Endothelial cell of umbilical vein (primary cell): ENCODE measurements at regions of chr14 and their contacts with region 1.

Region 1: GRCh38 chr14:66403183-66403582 is 83.0 kb upstream of the CCDC196 start:
- DNase-seq: peak; percentile 27
- H3K4me3 ChIP-seq: no peak overlapping the region
- H3K27ac ChIP-seq: no peak overlapping the region
- H3K4me1 ChIP-seq: peaks cover 11% of the 10 kb centered on the region
- H3K27me3 ChIP-seq: no peaks in the 10 kb centered on the region
- CTCF ChIP-seq: peak; percentile 9 to 31
- POLR2A ChIP-seq: no peak

Region 2: DNA sequence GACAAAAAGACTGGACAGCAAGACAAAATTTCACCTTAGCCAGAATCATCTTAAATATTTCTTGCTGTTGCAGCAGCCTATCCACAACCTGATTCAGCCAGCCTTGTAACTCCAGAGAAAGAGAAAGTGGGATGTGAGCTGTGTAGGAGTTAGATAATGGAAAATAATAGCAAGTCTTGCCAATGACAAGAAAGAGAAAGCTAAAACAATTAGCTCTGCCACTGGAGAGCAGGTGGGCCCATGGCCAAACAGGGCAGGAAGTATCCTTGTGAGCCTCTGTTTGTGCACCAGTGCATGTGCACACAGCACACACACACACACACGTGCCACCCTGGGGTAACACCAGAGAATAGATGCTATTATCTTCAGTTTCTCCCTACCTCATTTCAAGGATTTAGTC is 23.0 kb before region 1 on chr14:
- CTCF ChIA-PET with region 1: interaction called, 10 read pairs
- POLR2A ChIA-PET with region 1: no interaction called
- dilution Hi-C with region 1: no loop called
- intact Hi-C with region 1: no loop called
- DNase-seq: peak; percentile 19
- H3K4me3 ChIP-seq: no peak overlapping the region
- H3K27ac ChIP-seq: no peak overlapping the region
- H3K4me1 ChIP-seq: no peaks in the 10 kb centered on the region
- H3K27me3 ChIP-seq: peaks cover 6% of the 10 kb centered on the region in 2 experiments
- CTCF ChIP-seq: no peak
- POLR2A ChIP-seq: no peak

Region 3: GRCh38 chr14:66425402-66425801 is 22.2 kb after region 1 on chr14:
- CTCF ChIA-PET with region 1: no interaction called
- POLR2A ChIA-PET with region 1: no interaction called
- dilution Hi-C with region 1: no loop called
- intact Hi-C with region 1: no loop called
- DNase-seq: no peak
- H3K4me3 ChIP-seq: no peak overlapping the region
- H3K27ac ChIP-seq: no peak overlapping the region
- H3K4me1 ChIP-seq: no peaks in the 10 kb centered on the region
- H3K27me3 ChIP-seq: no peaks in the 10 kb centered on the region
- CTCF ChIP-seq: no peak
- POLR2A ChIP-seq: no peak